Naive thymus-derived CD4-positive, alpha-beta T cell (primary cell): ENCODE measurements at regions of chr5 and their contacts with region 1.

Region 1: GRCh38 chr5:139422307-139422893 is 16.9 kb downstream of the DNAJC18 start:
- DNase-seq: peak in 7 of 9 donors; percentile 65 to 86 (median 75)
- ATAC-seq: peak; percentile 99
- H3K4me3 ChIP-seq: no peak overlapping the region
- H3K4me3 Mint-ChIP-seq: peak overlapping the region in 2 of 10 donors; percentile 19 to 47
- H3K27ac ChIP-seq: no peak overlapping the region
- H3K27ac Mint-ChIP-seq: peak overlapping the region in 6 of 9 donors; percentile 16 to 87 (median 74)
- H3K4me1 ChIP-seq: peaks cover 3 to 4% of the 10 kb centered on the region in 2 donors
- H3K4me1 Mint-ChIP-seq: peaks cover 4 to 40% (median 6%) of the 10 kb centered on the region in 7 donors
- H3K27me3 ChIP-seq: no peaks in the 10 kb centered on the region
- H3K27me3 Mint-ChIP-seq: no peaks in the 10 kb centered on the region

Region 2: GRCh38 chr5:139392678-139393496 is 29.5 kb before region 1 on chr5:
- CTCF ChIA-PET with region 1: no interaction called
- POLR2A ChIA-PET with region 1: no interaction called
- intact Hi-C with region 1: loop called in 1 of 2 experiments (anchors 1 kb)
- DNase-seq: peak; percentile 39 to 87 (median 60)
- ATAC-seq: peak; percentile 82
- H3K4me3 ChIP-seq: peak overlapping the region; percentile 76
- H3K4me3 Mint-ChIP-seq: peak overlapping the region; percentile 87 to 97 (median 90)
- H3K27ac ChIP-seq: peak overlapping the region; percentile 17
- H3K27ac Mint-ChIP-seq: peak overlapping the region in 6 of 9 donors; percentile 7 to 97 (median 59)
- H3K4me1 ChIP-seq: peaks cover 5 to 34% of the 10 kb centered on the region in 2 donors
- H3K4me1 Mint-ChIP-seq: peaks cover 12 to 61% (median 23%) of the 10 kb centered on the region in 7 donors
- H3K27me3 ChIP-seq: no peaks in the 10 kb centered on the region
- H3K27me3 Mint-ChIP-seq: no peaks in the 10 kb centered on the region

Region 3: DNA sequence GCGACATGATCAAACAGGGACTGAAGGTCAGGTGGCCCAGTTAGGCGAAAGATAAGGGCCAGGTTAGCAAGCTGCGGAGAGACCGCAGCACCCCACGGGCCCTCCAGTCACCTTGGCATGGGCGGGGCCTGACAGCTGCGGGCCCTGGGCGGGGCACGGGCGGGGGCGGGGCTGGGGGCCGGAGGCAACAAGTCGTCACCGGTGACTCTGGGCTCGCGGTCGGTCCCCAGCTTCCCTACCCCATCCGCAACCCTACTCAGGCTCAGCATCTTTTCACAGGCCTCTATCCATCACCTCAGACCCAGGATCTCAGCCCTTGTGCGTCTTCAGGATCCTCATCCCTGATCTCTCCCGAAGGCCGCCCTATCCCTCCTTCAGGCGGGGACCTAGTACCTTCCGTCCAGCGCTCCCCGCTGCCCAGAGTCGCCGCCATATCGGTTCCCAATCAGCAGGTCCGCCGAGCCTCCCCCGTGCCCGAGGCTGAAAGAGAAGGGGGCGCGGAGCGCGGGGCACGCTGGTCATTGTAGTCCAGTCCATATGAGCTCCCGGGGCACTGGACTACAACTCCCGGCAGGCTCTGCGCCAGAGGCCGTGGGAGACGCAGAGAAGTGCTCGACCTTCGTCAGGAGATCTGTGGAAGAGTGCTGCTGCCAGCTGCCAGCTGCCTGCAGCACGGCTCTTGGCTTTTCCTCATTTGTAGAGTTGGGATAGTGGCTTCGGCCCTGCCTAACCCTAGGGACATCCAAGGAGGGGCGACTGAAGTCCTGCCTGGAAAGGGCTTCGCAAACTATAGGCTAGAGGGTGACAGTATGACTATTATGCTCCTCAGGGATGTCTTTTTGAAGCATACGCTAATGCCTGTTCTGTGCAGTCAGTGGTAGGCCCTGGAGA is 16.9 kb after region 1 on chr5 and contains the start of gene DNAJC18:
- CTCF ChIA-PET with region 1: interaction called, 30 read pairs
- POLR2A ChIA-PET with region 1: interaction called, 4 read pairs
- intact Hi-C with region 1: loop called in 1 of 2 experiments (anchors 1 kb)
- DNase-seq: peak; percentile 71 to 90 (median 85)
- ATAC-seq: peak; percentile 96
- H3K4me3 ChIP-seq: peak within 1 kb of the TSS; percentile 86
- H3K4me3 Mint-ChIP-seq: peak within 1 kb of the TSS; percentile 84 to 99 (median 98)
- H3K27ac ChIP-seq: peak within 1 kb of the TSS; percentile 100
- H3K27ac Mint-ChIP-seq: peak within 1 kb of the TSS; percentile 96 to 100 (median 99)
- H3K4me1 ChIP-seq: peaks cover 15 to 26% of the 10 kb centered on the region in 2 donors
- H3K4me1 Mint-ChIP-seq: peaks cover 23 to 64% (median 45%) of the 10 kb centered on the region in 7 donors
- H3K27me3 ChIP-seq: no peaks in the 10 kb centered on the region
- H3K27me3 Mint-ChIP-seq: no peaks in the 10 kb centered on the region
- total RNA-seq, gene DNAJC18: 2.2 to 9.7 (median 4.9) TPM

Region 4: GRCh38 chr5:139474890-139475791 is 52.7 kb after region 1 on chr5:
- CTCF ChIA-PET with region 1: interaction called, 4 read pairs
- POLR2A ChIA-PET with region 1: interaction called, 6 read pairs
- intact Hi-C with region 1: loop called in 1 of 2 experiments (anchors 2 kb)
- DNase-seq: peak in 4 of 9 donors; percentile 40 to 48 (median 44)
- ATAC-seq: peak; percentile 74
- H3K4me3 ChIP-seq: peak overlapping the region; percentile 42
- H3K4me3 Mint-ChIP-seq: peak overlapping the region; percentile 49 to 97 (median 68)
- H3K27ac ChIP-seq: peak overlapping the region; percentile 64
- H3K27ac Mint-ChIP-seq: peak overlapping the region; percentile 30 to 98 (median 88)
- H3K4me1 ChIP-seq: peaks cover 37 to 76% of the 10 kb centered on the region in 2 donors
- H3K4me1 Mint-ChIP-seq: peaks cover 60 to 92% (median 80%) of the 10 kb centered on the region in 7 donors
- H3K27me3 ChIP-seq: no peaks in the 10 kb centered on the region
- H3K27me3 Mint-ChIP-seq: no peaks in the 10 kb centered on the region

Region 5: DNA sequence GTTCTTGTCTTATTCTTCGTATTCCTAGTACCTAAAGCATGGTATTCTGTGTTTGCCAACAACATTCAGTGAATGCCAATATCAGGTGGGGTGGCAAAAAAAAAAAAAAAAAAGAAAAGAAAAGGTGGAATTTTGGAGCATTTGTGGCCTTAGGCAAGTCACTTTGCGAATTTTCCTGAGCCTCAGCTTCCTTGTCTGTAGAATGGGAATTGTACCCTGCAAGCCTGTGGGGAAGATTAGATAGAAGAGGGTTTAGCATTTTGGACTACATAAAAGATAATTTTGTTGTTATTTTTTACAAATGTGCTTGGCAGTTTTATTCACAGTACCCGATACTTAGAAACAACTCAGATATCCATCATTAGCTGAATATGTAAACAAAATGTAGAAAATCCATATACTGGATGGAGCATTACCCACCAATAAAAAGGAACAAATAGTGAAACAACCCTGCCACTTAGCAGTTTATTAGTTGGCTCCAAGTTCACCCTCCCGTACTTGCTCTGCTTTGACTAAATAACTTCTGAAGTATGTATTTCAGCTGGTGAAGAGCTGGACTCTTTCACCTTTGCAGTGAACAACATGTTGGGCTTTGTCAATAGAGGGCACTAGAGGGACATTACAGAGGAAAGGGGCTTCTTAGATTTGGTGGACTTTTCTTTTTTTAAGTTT is 152.4 kb after region 1 on chr5:
- CTCF ChIA-PET with region 1: interaction called, 4 read pairs
- POLR2A ChIA-PET with region 1: no interaction called
- intact Hi-C with region 1: loop called (anchors 1 to 5 kb)
- DNase-seq: peak in 7 of 9 donors; percentile 27 to 60 (median 47)
- ATAC-seq: peak; percentile 75
- H3K4me3 ChIP-seq: no peak overlapping the region
- H3K4me3 Mint-ChIP-seq: peak overlapping the region in 9 of 10 donors; percentile 11 to 80 (median 53)
- H3K27ac ChIP-seq: peak overlapping the region; percentile 57
- H3K27ac Mint-ChIP-seq: peak overlapping the region; percentile 62 to 96 (median 90)
- H3K4me1 ChIP-seq: peaks cover 61 to 68% of the 10 kb centered on the region in 2 donors
- H3K4me1 Mint-ChIP-seq: peaks cover 56 to 88% (median 74%) of the 10 kb centered on the region in 7 donors
- H3K27me3 ChIP-seq: no peaks in the 10 kb centered on the region
- H3K27me3 Mint-ChIP-seq: no peaks in the 10 kb centered on the region

Region 6: DNA sequence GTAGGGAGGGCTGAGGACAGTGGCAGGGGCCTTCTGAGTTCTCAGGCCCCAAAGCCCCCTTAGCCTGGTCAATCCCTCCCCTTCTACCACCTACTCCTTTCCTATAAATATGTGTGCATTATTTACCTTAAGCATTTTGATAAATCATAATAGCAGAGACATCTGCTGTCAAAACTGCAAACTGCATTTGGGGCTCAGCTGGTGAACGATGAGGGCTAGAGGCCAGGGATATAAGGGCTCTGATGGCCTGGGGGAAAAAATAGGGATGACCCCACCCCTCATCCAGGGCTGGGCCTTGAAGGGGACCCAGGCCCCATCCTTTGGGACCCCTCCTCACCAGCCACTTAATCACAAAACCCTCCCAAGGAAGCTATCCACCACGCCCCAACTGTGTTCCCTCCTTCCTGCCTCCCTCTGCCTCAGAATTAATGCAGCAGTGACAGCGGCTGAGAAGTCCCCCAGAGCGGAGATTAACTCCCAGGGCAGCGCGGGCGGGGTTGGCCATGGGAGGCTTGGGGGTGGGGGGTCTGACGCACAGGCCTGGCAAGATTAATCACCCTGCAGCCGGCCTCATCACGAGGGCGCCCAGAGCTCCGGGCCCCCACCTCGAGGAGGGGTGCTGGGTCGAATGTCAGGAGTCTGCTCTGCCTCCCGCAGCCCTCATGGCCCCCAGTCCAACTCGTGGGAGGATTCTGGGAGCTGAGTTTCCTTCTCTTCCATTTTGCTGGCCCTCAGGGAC is 267.8 kb after region 1 on chr5:
- CTCF ChIA-PET with region 1: interaction called, 3 read pairs
- POLR2A ChIA-PET with region 1: no interaction called
- intact Hi-C with region 1: loop called (anchors 1 to 2 kb)
- DNase-seq: peak in 2 of 9 donors; percentile 26 to 27
- ATAC-seq: peak; percentile 59
- H3K4me3 ChIP-seq: no peak overlapping the region
- H3K4me3 Mint-ChIP-seq: no peak overlapping the region
- H3K27ac ChIP-seq: no peak overlapping the region
- H3K27ac Mint-ChIP-seq: no peak overlapping the region
- H3K4me1 ChIP-seq: no peaks in the 10 kb centered on the region
- H3K4me1 Mint-ChIP-seq: peaks cover 3 to 17% (median 6%) of the 10 kb centered on the region in 7 donors
- H3K27me3 ChIP-seq: no peaks in the 10 kb centered on the region
- H3K27me3 Mint-ChIP-seq: peaks cover 0 to 17% (median 0%) of the 10 kb centered on the region in 5 donors